IMR-90 (cell line): ENCODE measurements at regions of chr1 and their contacts with region 1.

Region 1: DNA sequence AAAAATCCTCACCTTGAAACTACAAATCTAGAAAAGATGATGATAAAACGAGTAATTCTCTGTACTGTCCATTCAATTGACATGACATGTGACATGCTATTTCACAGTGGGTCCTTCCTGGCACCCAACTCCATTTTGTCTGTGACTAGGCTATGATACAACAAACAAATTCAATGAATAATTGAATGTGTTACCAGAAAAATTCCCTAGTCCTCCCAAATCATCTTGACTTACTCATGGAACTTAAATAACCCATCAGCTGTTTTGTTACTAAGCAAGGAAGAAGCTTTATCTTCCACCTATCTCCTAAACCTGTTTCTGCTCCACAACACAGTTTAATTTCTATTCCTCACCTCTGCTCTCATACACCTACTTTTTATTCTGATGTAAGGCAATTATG is 30.4 kb downstream of the B3GALNT2 start:
- DNase-seq: peak; percentile 57
- ATAC-seq: no peak
- H3K4me3 ChIP-seq: no peak overlapping the region
- H3K27ac ChIP-seq: no peak overlapping the region
- H3K4me1 ChIP-seq: peaks cover 2% of the 10 kb centered on the region; the same call in 1 of the 2 replicates
- H3K27me3 ChIP-seq: no peaks in the 10 kb centered on the region
- CTCF ChIP-seq: no peak
- POLR2A ChIP-seq: no peak
- RAD21 ChIP-seq: no peak

Region 2: GRCh38 chr1:235486321-235486720 is 12.5 kb after region 1 on chr1:
- CTCF ChIA-PET with region 1: no interaction called
- POLR2A ChIA-PET with region 1: no interaction called
- dilution Hi-C with region 1: no loop called
- in situ Hi-C with region 1: no loop called
- intact Hi-C with region 1: loop called (anchors 2 kb)
- DNase-seq: peak; percentile 16
- ATAC-seq: no peak
- H3K4me3 ChIP-seq: no peak overlapping the region
- H3K27ac ChIP-seq: no peak overlapping the region
- H3K4me1 ChIP-seq: no peaks in the 10 kb centered on the region
- H3K27me3 ChIP-seq: no peaks in the 10 kb centered on the region
- CTCF ChIP-seq: no peak
- POLR2A ChIP-seq: no peak
- RAD21 ChIP-seq: no peak